ENCODE measurements at regions of chrX and their contacts with region 1.

Region 1: GRCh38 chrX:39814391-39814790 is 283.4 kb downstream of the BCOR start:
- DNase-seq: no peak

Region 2: GRCh38 chrX:39755143-39756032 is 59.0 kb before region 1 on chrX:
- intact Hi-C with region 1: loop called in 1 of 2 experiments (anchors 10 kb)
- DNase-seq: peak; percentile 94

Region 3: GRCh38 chrX:39772057-39772832 is 42.1 kb before region 1 on chrX:
- intact Hi-C with region 1: no loop called
- DNase-seq: no peak

Region 4: GRCh38 chrX:39910651-39911050 is 96.3 kb after region 1 on chrX:
- intact Hi-C with region 1: no loop called
- DNase-seq: peak; percentile 47

Region 5: GRCh38 chrX:40006106-40007017 is 192.0 kb after region 1 on chrX:
- intact Hi-C with region 1: loop called in 1 of 2 experiments (anchors 5 kb)
- DNase-seq: peak; percentile 82

Region 6: GRCh38 chrX:40083120-40083978 is 269.0 kb after region 1 on chrX:
- intact Hi-C with region 1: loop called in 1 of 2 experiments (anchors 10 kb)
- DNase-seq: no peak